HCT116 (cell line): ENCODE measurements at regions of chr12 and their contacts with region 1.

Region 1: GRCh38 chr12:122064025-122064777 is 14.4 kb upstream of the MLXIP start:
- DNase-seq: peak; percentile 99
- ATAC-seq: peak; percentile 92
- H3K4me3 ChIP-seq: peak overlapping the region; percentile 55
- H3K27ac ChIP-seq: peak overlapping the region; percentile 82
- H3K4me1 ChIP-seq: peaks cover 25 to 37% of the 10 kb centered on the region in 2 experiments
- H3K27me3 ChIP-seq: no peaks in the 10 kb centered on the region
- CTCF ChIP-seq: peak; percentile 49 to 80 (median 64); a peak in 5 of 6 replicates
- POLR2A ChIP-seq: peak; percentile 84
- RAD21 ChIP-seq: peak; percentile 52; the same call in 1 of the 2 replicates

Region 2: DNA sequence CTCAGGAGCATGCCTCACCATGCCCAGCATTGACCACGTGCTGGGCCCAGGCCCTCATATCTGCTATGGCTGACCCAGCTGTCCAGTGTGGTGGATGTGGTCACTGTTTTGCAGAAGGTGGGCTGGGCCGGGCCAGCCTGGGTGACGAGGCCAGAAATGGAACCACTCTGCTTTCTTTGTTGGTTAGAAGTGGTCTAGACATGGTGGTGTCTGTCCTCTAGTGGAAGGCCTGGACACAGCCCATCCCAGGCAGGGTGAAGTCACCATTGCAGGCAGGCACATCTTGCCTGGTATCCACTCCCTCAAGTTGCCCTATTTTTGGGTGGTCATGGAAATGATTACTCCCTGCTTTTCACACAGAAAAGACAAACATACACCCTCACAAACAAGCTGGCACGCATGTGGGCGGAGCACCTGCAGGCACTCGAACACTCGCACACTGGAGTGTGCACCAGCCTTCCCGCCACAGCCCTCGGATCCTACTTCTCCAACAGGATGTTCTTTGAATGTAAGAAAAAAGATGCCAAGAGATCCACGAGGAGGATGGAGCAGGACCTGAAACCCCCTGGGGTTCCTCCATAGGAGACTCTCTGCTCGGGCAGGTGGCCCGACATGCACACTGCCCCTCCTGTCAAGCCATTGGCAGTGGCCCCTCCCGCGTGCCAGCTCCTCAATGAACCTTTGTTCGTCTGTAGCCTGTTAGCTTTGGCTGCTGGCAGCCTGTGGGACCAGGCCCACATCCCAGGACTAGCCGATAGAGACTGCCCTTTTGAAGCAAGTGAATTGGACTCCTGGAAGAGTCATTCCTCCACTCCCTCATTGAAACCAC is 52.7 kb after region 1 on chr12:
- CTCF ChIA-PET with region 1: no interaction called
- POLR2A ChIA-PET with region 1: no interaction called
- RAD21 ChIA-PET with region 1: no interaction called
- intact Hi-C with region 1: loop called (anchors 2 kb)
- DNase-seq: no peak
- ATAC-seq: no peak
- H3K4me3 ChIP-seq: no peak overlapping the region
- H3K27ac ChIP-seq: no peak overlapping the region
- H3K4me1 ChIP-seq: peaks cover 30 to 45% of the 10 kb centered on the region in 2 experiments
- H3K27me3 ChIP-seq: no peaks in the 10 kb centered on the region
- CTCF ChIP-seq: no peak
- POLR2A ChIP-seq: no peak
- RAD21 ChIP-seq: no peak